HCT116 (cell line): ENCODE measurements at regions of chr1 and their contacts with region 1.

Region 1: GRCh38 chr1:54950369-54951163 is 29.9 kb upstream of the TMEM61 start:
- DNase-seq: peak; percentile 60
- ATAC-seq: peak; percentile 84
- H3K4me3 ChIP-seq: peak overlapping the region in 1 of 2 experiments; percentile 8; a peak in 1 of 4 replicates
- H3K27ac ChIP-seq: no peak overlapping the region; the same call in 1 of the 2 replicates
- H3K4me1 ChIP-seq: peaks cover 6 to 31% of the 10 kb centered on the region in 2 experiments
- H3K27me3 ChIP-seq: no peaks in the 10 kb centered on the region
- CTCF ChIP-seq: peak; percentile 68 to 95 (median 74)
- POLR2A ChIP-seq: no peak
- RAD21 ChIP-seq: peak; percentile 97

Region 2: DNA sequence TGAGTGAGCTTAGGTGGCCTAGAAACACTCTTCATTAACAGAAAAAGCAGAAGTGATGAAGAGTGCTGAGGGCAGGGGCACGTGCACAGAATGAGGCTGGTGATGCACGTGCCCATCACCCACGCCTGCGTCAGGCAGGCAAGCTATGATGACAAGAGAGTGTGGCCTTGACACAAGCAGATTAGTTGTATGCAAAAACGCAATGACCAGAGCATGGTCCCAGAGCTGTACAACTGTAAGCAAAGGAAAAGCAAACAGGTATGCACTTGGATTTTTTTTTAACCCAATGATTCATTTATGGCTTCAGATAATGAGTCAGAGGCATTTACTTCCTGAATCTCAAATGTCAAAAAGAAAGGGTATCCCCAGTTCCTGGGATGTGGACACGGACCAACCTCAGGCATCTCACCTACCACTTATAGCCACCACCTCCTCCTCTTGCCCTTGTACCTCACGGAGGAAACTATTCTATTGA is 20.8 kb after region 1 on chr1:
- CTCF ChIA-PET with region 1: interaction called, 11 read pairs
- POLR2A ChIA-PET with region 1: no interaction called
- RAD21 ChIA-PET with region 1: interaction called in 1 of 2 experiments, 6 read pairs
- intact Hi-C with region 1: no loop called
- DNase-seq: peak; percentile 54
- ATAC-seq: peak; percentile 69
- H3K4me3 ChIP-seq: peak overlapping the region in 1 of 2 experiments; percentile 10; a peak in 1 of 4 replicates
- H3K27ac ChIP-seq: peak overlapping the region; percentile 33; the same call in 1 of the 2 replicates
- H3K4me1 ChIP-seq: peaks cover 15 to 62% of the 10 kb centered on the region in 2 experiments
- H3K27me3 ChIP-seq: no peaks in the 10 kb centered on the region
- CTCF ChIP-seq: no peak
- POLR2A ChIP-seq: no peak
- RAD21 ChIP-seq: peak; percentile 13; the same call in 1 of the 2 replicates

Region 3: GRCh38 chr1:54989968-54990810 is 39.6 kb after region 1 on chr1:
- CTCF ChIA-PET with region 1: interaction called, 85 read pairs
- POLR2A ChIA-PET with region 1: no interaction called
- RAD21 ChIA-PET with region 1: interaction called, 20 to 25 read pairs
- intact Hi-C with region 1: no loop called
- DNase-seq: no peak
- ATAC-seq: no peak
- H3K4me3 ChIP-seq: no peak overlapping the region
- H3K27ac ChIP-seq: no peak overlapping the region
- H3K4me1 ChIP-seq: peaks cover 0 to 4% of the 10 kb centered on the region in 2 experiments; a peak in 1 of 4 replicates
- H3K27me3 ChIP-seq: no peaks in the 10 kb centered on the region
- CTCF ChIP-seq: no peak
- POLR2A ChIP-seq: no peak
- RAD21 ChIP-seq: no peak

Region 4: DNA sequence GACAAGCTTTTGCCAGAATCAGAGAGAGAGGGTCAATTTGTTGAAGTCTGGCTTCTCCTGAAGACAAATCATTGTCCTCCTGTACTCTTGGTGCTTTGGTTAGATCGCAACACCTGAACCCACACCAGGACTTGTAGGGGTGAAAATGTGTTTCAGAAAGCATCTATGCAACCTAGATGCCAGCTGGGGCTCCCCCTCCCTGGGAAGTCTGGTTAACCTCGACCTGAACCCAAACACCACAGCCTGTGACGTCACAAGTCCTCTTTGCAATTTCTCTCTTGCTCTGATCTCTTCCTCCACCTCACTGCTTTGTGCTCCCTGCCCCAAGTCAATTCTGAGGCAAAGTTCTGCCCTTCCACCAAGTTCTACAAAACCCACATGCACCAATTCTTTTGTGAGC is 307.4 kb after region 1 on chr1:
- CTCF ChIA-PET with region 1: no interaction called
- POLR2A ChIA-PET with region 1: no interaction called
- RAD21 ChIA-PET with region 1: no interaction called
- intact Hi-C with region 1: no loop called
- DNase-seq: no peak
- ATAC-seq: no peak
- H3K4me3 ChIP-seq: no peak overlapping the region
- H3K27ac ChIP-seq: no peak overlapping the region
- H3K4me1 ChIP-seq: no peaks in the 10 kb centered on the region
- H3K27me3 ChIP-seq: no peaks in the 10 kb centered on the region
- CTCF ChIP-seq: no peak
- POLR2A ChIP-seq: no peak
- RAD21 ChIP-seq: no peak